ENCODE measurements at regions of chr10 and their contacts with region 1.

Region 1: GRCh38 chr10:118754720-118755480 is at the start of gene CACUL1:
- H3K4me3 Mint-ChIP-seq: peak within 1 kb of the TSS; percentile 99
- H3K27ac Mint-ChIP-seq: peak within 1 kb of the TSS; percentile 92
- H3K4me1 Mint-ChIP-seq: peaks cover 40% of the 10 kb centered on the region
- H3K27me3 Mint-ChIP-seq: peaks cover 15% of the 10 kb centered on the region

Region 2: DNA sequence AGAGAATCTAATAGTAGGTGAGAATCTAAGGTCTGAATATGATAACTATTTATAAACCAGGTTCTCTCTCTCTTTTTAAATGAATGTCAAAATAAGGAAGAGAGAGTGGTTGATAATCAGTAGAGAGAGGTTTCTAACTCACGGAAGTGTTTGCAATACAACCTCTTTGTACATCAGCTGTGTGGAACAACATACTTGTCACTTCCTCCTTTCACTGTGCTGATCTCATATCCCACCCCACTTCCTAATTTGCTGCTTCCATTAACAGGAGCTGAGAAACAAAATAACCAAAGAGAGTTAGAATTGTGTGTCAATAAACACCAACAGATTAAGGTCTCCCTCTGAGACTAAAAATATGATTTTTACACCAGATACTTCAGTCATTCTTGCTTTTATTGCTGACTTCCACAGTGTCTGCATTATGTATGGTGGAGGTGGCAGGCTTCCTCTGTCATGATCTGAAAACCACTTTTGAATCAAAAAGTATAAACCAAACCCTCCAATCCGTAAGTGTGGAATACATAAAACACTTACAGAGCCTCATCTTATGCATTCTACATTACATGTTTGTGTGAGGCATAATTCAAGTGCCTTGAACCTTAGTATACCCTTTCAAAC is 25.1 kb before region 1 on chr10:
- intact Hi-C with region 1: loop called (anchors 2 kb)
- H3K4me3 Mint-ChIP-seq: peak overlapping the region; percentile 17
- H3K27ac Mint-ChIP-seq: peak overlapping the region; percentile 71
- H3K4me1 Mint-ChIP-seq: peaks cover 60% of the 10 kb centered on the region
- H3K27me3 Mint-ChIP-seq: no peaks in the 10 kb centered on the region

Region 3: GRCh38 chr10:118792526-118792925 is 37.6 kb after region 1 on chr10:
- intact Hi-C with region 1: loop called (anchors 1 kb)
- H3K4me3 Mint-ChIP-seq: peak overlapping the region; percentile 62
- H3K27ac Mint-ChIP-seq: peak overlapping the region; percentile 97
- H3K4me1 Mint-ChIP-seq: peaks cover 48% of the 10 kb centered on the region
- H3K27me3 Mint-ChIP-seq: no peaks in the 10 kb centered on the region